Gastrocnemius medialis (tissue), 4 donors: ENCODE measurements at regions of chr13 and their contacts with region 1.

Region 1: GRCh38 chr13:20945952-20946383 is 43.4 kb upstream of the XPO4 start:
- DNase-seq: no peak
- ATAC-seq: no peak
- H3K4me3 ChIP-seq: peak overlapping the region in 2 of 4 donors; percentile 22 to 39
- H3K27ac ChIP-seq: no peak overlapping the region
- H3K4me1 ChIP-seq: peaks cover 0 to 7% of the 10 kb centered on the region in 2 donors
- H3K27me3 ChIP-seq: peaks cover 3 to 10% (median 5%) of the 10 kb centered on the region in 3 donors
- CTCF ChIP-seq: no peak
- POLR2A ChIP-seq: no peak

Region 2: DNA sequence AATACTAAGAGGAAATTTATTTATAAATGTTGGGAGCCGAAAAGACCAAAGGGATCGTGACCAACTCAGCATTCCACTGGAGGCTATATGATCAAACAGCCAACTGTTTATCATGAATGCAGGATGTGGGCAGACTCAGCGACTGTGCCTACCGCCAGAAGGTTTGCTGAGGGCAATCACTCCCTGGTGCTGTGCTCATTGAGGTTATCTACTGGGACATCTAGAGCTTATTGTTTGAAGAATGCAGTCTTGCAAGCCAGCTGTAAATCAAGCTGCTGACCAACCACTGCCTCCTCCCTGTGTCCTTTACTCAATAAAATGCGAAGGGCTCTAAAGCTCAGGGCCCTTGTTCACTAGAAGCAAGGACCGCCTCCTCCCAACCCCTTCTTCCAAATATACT is 34.9 kb before region 1 on chr13:
- in situ Hi-C with region 1: no loop called
- intact Hi-C with region 1: no loop called
- DNase-seq: no peak
- ATAC-seq: no peak
- H3K4me3 ChIP-seq: no peak overlapping the region
- H3K27ac ChIP-seq: no peak overlapping the region
- H3K4me1 ChIP-seq: no peaks in the 10 kb centered on the region
- H3K27me3 ChIP-seq: no peaks in the 10 kb centered on the region
- CTCF ChIP-seq: no peak
- POLR2A ChIP-seq: no peak

Region 3: DNA sequence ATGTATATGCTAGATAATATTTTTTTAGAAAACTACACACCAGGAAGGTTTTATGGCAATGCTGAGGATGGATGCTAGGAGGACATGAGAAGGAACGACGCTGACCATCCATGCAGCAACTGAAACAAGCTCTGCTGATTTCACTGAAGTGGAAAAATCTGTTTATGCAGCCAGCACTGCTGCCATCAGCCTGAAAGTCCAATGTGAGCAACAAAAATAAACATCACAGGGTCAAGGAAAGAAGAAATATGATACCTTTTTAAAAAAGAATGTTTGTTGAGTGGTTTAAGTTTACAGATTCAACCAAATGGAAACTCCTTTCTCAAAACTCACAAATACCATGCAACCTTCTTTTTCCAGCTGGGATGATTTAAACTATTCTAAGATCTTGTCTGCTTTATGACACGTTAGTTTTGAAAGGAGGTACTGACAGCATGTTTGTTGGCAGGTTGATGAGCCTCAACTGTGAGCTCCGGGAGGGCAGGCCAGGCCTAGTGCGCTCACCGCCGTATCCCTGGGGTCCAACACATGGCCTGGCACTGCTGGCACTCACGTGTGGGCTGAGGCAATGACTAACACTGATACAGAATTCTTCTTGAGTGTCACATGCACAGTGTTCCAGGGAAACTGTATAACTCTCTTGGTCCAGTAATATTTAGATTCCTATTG is 68.7 kb after region 1 on chr13:
- in situ Hi-C with region 1: loop called in 1 of 4 experiments (anchors 10 kb)
- intact Hi-C with region 1: no loop called
- DNase-seq: peak; percentile 78 to 90
- ATAC-seq: peak; percentile 82
- H3K4me3 ChIP-seq: no peak overlapping the region
- H3K27ac ChIP-seq: peak overlapping the region; percentile 86 to 91 (median 88)
- H3K4me1 ChIP-seq: peaks cover 84 to 91% of the 10 kb centered on the region in 2 donors
- H3K27me3 ChIP-seq: no peaks in the 10 kb centered on the region
- CTCF ChIP-seq: no peak
- POLR2A ChIP-seq: peak in 1 of 2 donors; percentile 31

Region 4: GRCh38 chr13:21137696-21138095 is 191.7 kb after region 1 on chr13:
- in situ Hi-C with region 1: loop called in 3 of 4 experiments (anchors 10 kb)
- intact Hi-C with region 1: no loop called
- DNase-seq: no peak
- ATAC-seq: no peak
- H3K4me3 ChIP-seq: no peak overlapping the region
- H3K27ac ChIP-seq: no peak overlapping the region
- H3K4me1 ChIP-seq: peaks cover 16 to 22% of the 10 kb centered on the region in 2 donors
- H3K27me3 ChIP-seq: no peaks in the 10 kb centered on the region
- CTCF ChIP-seq: no peak
- POLR2A ChIP-seq: no peak